ENCODE measurements at regions of chr6 and their contacts with region 1.

Region 1: GRCh38 chr6:151475653-151476523 is 17.9 kb upstream of the CCDC170 start:
- DNase-seq: peak in 2 of 5 donors; percentile 25 to 30
- ATAC-seq: peak in 1 of 4 donors; percentile 46
- H3K4me3 ChIP-seq: peak overlapping the region in 4 of 12 donors; percentile 2 to 28 (median 10)
- H3K27ac ChIP-seq: no peak overlapping the region
- H3K4me1 ChIP-seq: peaks cover 0 to 10% (median 0%) of the 10 kb centered on the region in 12 donors
- H3K27me3 ChIP-seq: no peaks in the 10 kb centered on the region
- CTCF ChIP-seq: peak; percentile 74 to 93 (median 84)
- POLR2A ChIP-seq: no peak

Region 2: DNA sequence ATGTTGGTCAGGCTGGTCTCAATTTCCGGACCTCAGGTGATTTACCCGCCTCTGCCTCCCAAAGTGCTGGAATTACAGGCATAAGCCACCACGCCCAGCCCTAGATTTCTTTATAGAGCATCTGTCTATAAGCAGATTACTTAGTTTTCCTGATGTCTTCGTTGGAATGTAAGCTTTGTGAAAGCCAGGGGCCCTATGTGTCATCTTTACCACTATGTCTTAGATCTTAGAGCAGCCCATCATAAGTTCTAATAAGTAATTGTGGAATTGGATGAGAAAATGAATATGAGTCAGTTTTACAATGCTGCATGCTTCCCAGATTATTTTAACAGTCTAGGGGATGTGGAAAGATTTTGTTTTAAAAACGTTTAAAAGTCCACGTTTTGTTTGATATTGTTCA is 75.4 kb before region 1 on chr6:
- intact Hi-C with region 1: loop called in 7 of 10 experiments (anchors 5 to 10 kb)
- DNase-seq: no peak
- ATAC-seq: no peak
- H3K4me3 ChIP-seq: no peak overlapping the region
- H3K27ac ChIP-seq: no peak overlapping the region
- H3K4me1 ChIP-seq: peaks cover 0 to 50% (median 19%) of the 10 kb centered on the region in 12 donors
- H3K27me3 ChIP-seq: no peaks in the 10 kb centered on the region
- CTCF ChIP-seq: no peak
- POLR2A ChIP-seq: no peak

Region 3: GRCh38 chr6:151409260-151409659 is 66.6 kb before region 1 on chr6:
- intact Hi-C with region 1: loop called in 7 of 10 experiments (anchors 5 to 10 kb)
- DNase-seq: no peak
- ATAC-seq: no peak
- H3K4me3 ChIP-seq: no peak overlapping the region
- H3K27ac ChIP-seq: no peak overlapping the region
- H3K4me1 ChIP-seq: peaks cover 0 to 14% (median under 1%) of the 10 kb centered on the region in 12 donors
- H3K27me3 ChIP-seq: no peaks in the 10 kb centered on the region
- CTCF ChIP-seq: no peak
- POLR2A ChIP-seq: no peak

Region 4: GRCh38 chr6:151440930-151441329 is 35.0 kb before region 1 on chr6:
- intact Hi-C with region 1: loop called in 2 of 10 experiments (anchors 5 kb)
- DNase-seq: no peak
- ATAC-seq: no peak
- H3K4me3 ChIP-seq: peak overlapping the region in 1 of 12 donors; percentile 20
- H3K27ac ChIP-seq: peak overlapping the region in 6 of 12 donors; percentile 1 to 40 (median 10)
- H3K4me1 ChIP-seq: peaks cover 0 to 52% (median 37%) of the 10 kb centered on the region in 12 donors
- H3K27me3 ChIP-seq: no peaks in the 10 kb centered on the region
- CTCF ChIP-seq: peak in 11 of 12 donors; percentile 11 to 61 (median 44)
- POLR2A ChIP-seq: no peak

Region 5: DNA sequence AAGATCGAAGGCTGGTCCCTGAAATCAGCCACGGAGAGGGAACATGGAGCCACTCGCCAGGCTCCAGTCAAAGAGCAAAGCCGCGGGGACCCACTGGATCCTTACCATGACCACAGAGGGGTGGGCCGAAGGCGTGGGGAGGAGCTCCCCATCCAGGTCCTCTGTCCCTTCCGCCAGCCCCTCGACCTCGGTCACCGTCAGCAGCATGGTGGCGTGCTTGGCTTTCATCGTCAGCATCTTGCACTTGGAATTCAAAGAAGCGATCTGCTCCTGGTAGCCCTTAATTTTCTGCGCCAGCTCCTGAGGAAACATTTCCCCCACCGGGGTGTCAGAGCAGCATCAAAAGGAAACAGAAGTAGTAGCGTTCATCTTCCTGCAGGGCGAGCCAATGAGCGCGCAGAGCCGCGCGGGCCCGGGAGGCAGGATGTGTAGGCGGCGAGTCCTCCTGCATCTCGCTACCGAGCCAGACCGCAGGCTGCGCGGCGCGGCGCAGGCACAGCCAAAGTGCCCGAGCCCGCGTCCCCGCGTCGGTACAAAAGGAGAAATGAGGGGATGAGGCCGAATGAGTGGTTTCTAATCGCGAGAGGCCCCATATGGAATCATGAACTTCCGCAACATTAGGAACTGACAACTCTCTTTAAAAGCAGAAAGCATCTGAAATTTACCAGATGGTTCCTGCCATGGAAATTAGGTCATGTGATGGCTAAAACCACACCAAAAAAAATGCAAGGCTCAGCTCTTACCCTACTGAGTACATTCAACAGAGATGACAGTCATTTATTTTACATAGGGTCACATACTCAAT is 826.1 kb after region 1 on chr6:
- intact Hi-C with region 1: no loop called
- DNase-seq: peak; percentile 87 to 94 (median 90)
- ATAC-seq: peak; percentile 92 to 98 (median 97)
- H3K4me3 ChIP-seq: peak overlapping the region; percentile 27 to 72 (median 56)
- H3K27ac ChIP-seq: peak overlapping the region; percentile 37 to 95 (median 81)
- H3K4me1 ChIP-seq: peaks cover 0 to 45% (median 13%) of the 10 kb centered on the region in 12 donors
- H3K27me3 ChIP-seq: no peaks in the 10 kb centered on the region
- CTCF ChIP-seq: peak; percentile 46 to 83 (median 64)
- POLR2A ChIP-seq: peak in 1 of 2 donors; percentile 30

Measured in heart left ventricle (tissue), 16 donors.